BJ (cell line): ENCODE measurements at regions of chr18 and their contacts with region 1.

Region 1: DNA sequence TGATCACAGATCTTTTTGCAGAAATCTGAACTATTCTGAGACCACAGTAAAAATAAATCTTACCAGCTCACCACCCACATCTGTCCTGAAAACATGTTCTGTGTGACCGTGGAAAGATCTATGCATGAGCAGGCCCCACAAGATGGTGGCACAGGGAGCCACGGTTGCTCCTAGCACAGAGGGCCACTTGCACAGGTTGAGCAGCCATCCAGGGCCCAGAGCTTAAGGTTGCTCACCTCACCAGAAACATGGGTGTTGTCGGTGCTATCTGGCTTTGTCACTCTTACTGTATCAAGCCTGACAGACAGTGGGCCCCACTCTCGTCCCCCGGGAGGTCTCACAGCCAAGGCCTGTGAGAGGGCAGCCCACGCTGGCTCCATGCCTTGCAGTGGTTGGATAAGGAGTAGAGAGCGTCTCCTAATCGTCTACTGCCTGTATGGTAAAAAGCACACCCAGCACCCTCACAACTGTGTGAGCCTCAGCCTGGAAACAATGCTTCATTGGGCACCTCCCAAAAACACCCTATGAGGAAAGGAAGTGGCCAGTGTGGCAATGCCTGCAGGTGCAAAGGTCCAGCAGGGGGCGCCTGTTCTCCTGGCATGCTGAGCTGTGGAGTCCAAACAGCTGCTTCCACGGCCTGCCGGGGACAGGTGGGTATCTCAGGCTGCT is 19.6 kb downstream of the TUBB6 start:
- DNase-seq: no peak
- H3K4me3 ChIP-seq: no peak overlapping the region
- H3K27me3 ChIP-seq: no peaks in the 10 kb centered on the region
- CTCF ChIP-seq: peak; percentile 91

Region 2: DNA sequence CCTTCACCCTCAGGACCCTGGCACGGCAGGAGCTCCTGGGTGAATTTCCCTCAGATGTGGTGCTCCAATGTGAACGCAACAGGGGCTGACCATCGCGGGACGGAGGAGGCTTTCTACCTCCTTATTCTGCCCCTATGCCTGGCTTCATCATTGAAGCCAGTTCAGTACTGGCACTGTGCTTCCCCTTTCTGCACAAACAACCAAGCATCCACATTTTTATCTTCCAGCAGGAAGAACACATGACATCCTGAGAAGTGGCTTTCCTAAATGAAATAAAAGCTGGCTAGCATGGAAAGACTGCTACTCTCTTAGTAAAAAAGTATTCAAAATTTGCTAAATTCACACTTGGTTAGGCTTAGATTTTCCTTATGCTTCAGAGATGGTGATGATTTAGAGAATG is 24.5 kb after region 1 on chr18:
- CTCF ChIA-PET with region 1: interaction called, 12 read pairs
- POLR2A ChIA-PET with region 1: no interaction called
- DNase-seq: no peak
- H3K4me3 ChIP-seq: no peak overlapping the region
- H3K27me3 ChIP-seq: no peaks in the 10 kb centered on the region
- CTCF ChIP-seq: no peak